Right ventricle myocardium inferior (tissue), 1 donor: ENCODE measurements at regions of chr19 and their contacts with region 1.

Region 1: GRCh38 chr19:55516878-55517620 is 19.9 kb downstream of the SBK2 start:
- DNase-seq: peak; percentile 95
- ATAC-seq: peak; percentile 98

Region 2: GRCh38 chr19:55536951-55537740 is 20.1 kb after region 1 on chr19 and contains the start of gene SBK2:
- intact Hi-C with region 1: loop called (anchors 1 kb)
- DNase-seq: no peak
- ATAC-seq: peak; percentile 53
- total RNA-seq, gene SBK2: 12.7 TPM

Region 3: GRCh38 chr19:55580628-55581144 is 63.6 kb after region 1 on chr19 and contains the start of gene ZNF579:
- intact Hi-C with region 1: loop called (anchors 5 kb)
- DNase-seq: peak; percentile 85
- ATAC-seq: peak; percentile 84
- total RNA-seq, gene ZNF579: 13.1 TPM

Region 4: DNA sequence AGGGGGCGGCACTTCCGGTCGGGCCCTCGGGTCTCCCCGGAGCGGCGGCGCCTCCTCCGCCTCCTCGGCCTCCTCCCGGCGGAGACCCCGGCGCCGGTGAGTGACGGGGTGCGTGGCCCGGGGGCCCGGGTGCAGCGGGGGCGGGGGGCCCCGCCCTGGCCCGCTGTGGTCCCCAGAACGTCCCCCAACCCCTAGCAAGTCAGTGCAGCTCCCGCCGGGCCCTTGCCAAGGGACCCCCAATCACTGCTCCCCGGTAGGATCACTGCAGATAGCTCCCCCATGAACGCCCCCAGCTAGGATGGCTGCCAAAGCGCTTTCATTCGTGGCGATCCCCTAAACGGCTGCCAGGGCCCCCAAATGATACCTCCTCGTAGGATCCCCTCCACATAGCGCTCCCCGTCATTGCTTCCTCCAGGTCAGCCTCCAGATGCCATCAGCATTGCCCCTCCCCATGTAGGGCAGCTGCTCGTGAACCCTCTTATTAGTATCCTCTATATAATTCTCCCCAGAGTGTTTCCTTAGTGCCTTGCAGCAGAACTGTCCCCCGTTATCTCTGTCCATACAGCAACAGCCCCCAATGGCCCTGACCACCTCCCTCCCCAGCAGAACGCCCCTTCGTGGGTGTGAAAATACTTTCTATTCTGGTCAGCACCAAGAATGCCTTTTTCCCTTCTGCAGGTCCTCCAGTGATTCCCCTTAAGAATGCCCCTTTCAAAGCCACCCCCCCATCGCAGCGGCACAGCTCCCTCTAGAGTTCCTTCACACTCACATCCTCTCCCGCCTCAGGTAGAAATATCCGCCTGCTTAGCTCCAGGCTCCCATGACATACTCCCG is 88.8 kb after region 1 on chr19 and contains the start of gene ZNF865:
- intact Hi-C with region 1: loop called (anchors 1 kb)
- DNase-seq: no peak
- ATAC-seq: peak; percentile 32
- total RNA-seq, gene ZNF865: 16.9 TPM

Region 5: DNA sequence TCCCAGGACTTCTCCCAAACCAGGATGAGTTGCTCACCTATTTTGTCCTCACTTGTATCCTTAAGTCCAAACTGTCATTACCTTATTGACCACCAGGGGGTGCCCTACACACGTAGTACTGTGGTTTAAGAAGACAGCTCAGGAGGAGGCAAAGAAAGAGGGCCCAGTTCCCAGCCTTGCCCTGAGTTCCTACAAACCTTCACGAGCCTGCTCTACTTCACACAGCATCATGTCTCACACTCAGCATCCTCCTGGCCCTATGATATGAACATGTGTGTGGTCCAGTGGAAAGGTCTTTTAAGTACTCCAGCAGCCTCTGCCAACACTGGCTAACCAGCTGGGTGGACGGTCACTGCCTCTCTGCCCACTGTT is 115.4 kb after region 1 on chr19:
- intact Hi-C with region 1: loop called (anchors 1 kb)
- DNase-seq: no peak
- ATAC-seq: peak; percentile 60